ENCODE measurements at regions of chr4 and their contacts with region 1.

Region 1: DNA sequence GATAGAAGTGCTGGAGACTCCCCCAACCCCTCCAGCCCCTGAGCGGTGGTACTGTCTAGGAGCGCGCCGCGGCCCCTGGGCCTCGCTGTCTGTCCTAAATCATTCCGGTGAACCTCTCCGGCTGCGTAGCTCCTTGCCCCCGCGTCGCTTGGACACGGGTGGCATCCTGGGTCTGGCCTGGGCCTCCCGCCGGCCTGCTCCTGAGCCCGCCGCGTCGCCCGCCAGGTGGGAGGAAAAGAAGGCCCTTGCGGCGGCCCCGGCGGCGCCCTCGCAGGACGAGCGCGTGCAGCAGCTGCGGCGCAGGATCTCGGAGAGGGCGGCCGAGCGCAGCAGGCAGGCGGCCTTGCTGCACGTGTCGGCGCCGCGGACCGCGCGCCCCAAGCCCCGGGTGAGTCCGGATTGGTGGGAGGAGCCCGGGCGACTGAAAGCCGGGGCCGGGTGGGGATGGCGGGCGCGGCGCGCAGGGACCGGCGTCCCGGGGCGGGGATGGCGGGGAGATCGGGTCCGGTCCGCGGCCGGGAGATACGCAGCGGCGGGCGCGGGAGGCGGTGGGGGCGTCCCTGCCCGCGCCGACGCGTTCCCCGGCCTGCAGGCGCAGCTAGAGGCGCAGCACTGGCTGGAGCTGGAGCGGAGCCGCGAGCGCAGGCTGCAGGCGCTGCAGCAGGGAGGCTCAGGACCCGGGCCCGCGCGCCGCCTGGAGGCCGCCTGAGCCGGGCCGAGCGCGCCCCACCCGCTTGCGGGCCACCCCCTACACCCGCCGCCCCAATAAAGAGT is 6.5 kb upstream of the RNF4 start:
- DNase-seq: peak; percentile 67 to 84 (median 73)
- ATAC-seq: peak; percentile 68 to 96 (median 90)
- H3K4me3 ChIP-seq: peak overlapping the region; percentile 35 to 80 (median 60)
- H3K27ac ChIP-seq: peak overlapping the region in 9 of 12 donors; percentile 6 to 78 (median 62)
- H3K4me1 ChIP-seq: peaks cover 0 to 18% (median 11%) of the 10 kb centered on the region in 12 donors
- H3K27me3 ChIP-seq: peaks cover 0 to 12% (median 0%) of the 10 kb centered on the region in 9 donors
- CTCF ChIP-seq: peak in 11 of 12 donors; percentile 33 to 79 (median 66)
- POLR2A ChIP-seq: no peak

Region 2: DNA sequence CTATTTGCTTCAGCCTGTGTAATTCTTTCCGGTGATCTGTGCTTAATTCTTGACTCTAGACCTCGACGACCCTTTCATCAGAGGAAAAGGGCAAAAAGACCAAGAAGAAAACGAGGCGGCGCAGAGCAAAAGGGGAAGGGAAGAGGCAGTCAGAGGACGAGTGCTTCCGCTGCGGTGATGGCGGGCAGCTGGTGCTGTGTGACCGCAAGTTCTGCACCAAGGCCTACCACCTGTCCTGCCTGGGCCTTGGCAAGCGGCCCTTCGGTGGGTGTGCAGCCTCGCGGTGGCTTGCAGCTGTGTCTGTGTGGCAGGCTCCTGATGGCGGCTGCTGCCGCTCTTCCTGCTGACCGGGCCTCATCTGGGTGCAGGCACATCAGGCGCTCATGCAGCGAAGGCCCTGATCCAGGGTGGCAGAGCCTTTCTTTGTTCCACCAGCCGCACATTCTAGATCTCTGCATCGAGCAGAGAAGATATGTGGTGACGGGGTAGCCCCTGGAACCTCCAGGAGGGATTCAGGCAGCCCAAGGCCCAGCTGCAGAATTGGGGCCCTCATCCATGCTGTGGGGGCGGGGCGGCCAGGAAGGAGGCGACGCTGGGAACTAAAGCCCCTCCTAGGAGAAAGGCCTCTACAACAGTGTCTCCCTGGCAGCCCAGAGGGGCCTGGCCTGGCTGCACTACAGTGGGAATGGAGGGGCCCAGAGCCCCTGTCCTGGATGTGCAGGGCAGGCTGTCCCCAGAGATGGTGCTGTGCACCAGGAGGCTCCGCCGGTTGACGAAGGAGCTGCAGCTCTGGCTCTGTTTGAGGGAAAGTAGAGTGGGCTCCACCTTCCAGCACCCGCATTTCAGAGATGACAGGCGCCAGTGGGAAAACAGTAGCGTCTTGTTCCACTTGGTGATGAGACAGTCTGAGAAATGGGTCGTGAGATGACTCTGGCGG is 485.7 kb before region 1 on chr4:
- intact Hi-C with region 1: no loop called
- DNase-seq: no peak
- ATAC-seq: no peak
- H3K4me3 ChIP-seq: no peak overlapping the region
- H3K27ac ChIP-seq: no peak overlapping the region
- H3K4me1 ChIP-seq: peaks cover 0 to 5% (median 0%) of the 10 kb centered on the region in 12 donors
- H3K27me3 ChIP-seq: no peaks in the 10 kb centered on the region
- CTCF ChIP-seq: no peak
- POLR2A ChIP-seq: no peak

Region 3: DNA sequence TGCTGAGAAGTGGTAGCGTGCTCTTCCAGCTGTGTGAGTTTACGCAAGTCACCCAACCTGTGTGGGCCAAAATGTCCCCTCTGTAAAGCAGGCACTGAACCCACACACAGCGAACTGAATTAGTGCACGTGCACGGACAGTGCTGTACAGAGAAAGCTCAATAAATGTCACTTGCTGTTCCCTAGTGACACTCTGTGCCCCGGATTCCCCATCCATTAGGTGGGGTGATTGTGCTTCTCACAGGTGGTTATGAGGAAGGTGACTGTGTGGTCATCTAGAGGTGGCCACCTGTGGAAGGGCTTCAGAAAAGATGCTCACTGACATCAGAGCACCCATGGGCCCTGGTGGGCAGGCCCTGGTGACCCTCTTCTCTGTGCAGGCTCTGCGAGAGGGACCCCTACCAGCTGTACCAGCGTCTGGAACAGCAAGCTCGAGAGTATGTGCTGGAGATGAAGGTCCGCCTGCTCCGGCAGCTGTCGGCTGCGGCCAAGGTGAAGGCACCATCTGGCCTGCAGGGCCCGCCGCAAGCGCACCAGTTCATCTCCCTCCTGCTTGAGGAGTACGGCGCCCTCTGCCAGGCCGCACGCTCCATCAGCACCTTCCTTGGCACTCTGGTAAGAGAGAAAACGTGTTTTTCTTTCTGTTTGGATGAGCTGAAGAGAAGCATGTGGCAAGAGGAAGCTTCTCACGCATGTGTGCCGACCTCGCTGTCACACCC is 168.3 kb after region 1 on chr4:
- intact Hi-C with region 1: loop called in 2 of 10 experiments (anchors 5 to 10 kb)
- DNase-seq: no peak
- ATAC-seq: peak in 1 of 4 donors; percentile 26
- H3K4me3 ChIP-seq: no peak overlapping the region
- H3K27ac ChIP-seq: no peak overlapping the region
- H3K4me1 ChIP-seq: peaks cover 0 to 22% (median 9%) of the 10 kb centered on the region in 12 donors
- H3K27me3 ChIP-seq: no peaks in the 10 kb centered on the region
- CTCF ChIP-seq: no peak
- POLR2A ChIP-seq: no peak

Measured in heart left ventricle (tissue), 16 donors.